ENCODE measurements at regions of chr19 and their contacts with region 1.

Region 1: GRCh38 chr19:13117772-13118423 is at the start of gene NACC1:
- DNase-seq: peak; percentile 82 to 96
- H3K4me3 ChIP-seq: peak within 1 kb of the TSS; percentile 96
- CTCF ChIP-seq: no peak
- POLR2A ChIP-seq: no peak
- total RNA-seq, gene NACC1: 21.4 to 46.1 (median 39.8) TPM

Region 2: DNA sequence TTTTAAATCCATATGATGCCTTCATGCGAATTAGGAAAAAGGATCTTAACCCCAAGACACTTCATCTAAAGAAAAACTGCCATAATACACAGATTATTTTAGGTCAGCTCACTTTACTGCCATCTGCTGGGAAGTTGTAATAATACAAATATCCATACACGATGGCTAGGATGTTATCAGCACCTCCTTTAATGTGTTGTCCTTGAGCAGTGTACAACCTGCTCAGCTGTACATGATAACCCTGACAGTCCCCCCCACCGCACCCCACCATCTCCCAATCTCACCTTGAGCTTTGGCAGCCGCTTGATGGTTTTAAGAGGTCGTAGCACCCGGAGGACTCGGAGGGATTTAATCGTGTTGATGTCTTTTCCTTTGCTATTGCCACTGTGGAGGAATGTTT is 144.6 kb after region 1 on chr19:
- intact Hi-C with region 1: loop called (anchors 10 kb)
- DNase-seq: no peak
- H3K4me3 ChIP-seq: no peak overlapping the region
- CTCF ChIP-seq: peak in 1 of 3 donors; percentile 19
- POLR2A ChIP-seq: no peak